ENCODE measurements at regions of chr19 and their contacts with region 1.

Region 1: GRCh38 chr19:13150187-13150930 is at the starts of genes IER2 and STX10:
- DNase-seq: peak; percentile 98
- total RNA-seq, gene IER2: 28.4 TPM
- total RNA-seq, gene STX10: 25.7 TPM

Region 2: DNA sequence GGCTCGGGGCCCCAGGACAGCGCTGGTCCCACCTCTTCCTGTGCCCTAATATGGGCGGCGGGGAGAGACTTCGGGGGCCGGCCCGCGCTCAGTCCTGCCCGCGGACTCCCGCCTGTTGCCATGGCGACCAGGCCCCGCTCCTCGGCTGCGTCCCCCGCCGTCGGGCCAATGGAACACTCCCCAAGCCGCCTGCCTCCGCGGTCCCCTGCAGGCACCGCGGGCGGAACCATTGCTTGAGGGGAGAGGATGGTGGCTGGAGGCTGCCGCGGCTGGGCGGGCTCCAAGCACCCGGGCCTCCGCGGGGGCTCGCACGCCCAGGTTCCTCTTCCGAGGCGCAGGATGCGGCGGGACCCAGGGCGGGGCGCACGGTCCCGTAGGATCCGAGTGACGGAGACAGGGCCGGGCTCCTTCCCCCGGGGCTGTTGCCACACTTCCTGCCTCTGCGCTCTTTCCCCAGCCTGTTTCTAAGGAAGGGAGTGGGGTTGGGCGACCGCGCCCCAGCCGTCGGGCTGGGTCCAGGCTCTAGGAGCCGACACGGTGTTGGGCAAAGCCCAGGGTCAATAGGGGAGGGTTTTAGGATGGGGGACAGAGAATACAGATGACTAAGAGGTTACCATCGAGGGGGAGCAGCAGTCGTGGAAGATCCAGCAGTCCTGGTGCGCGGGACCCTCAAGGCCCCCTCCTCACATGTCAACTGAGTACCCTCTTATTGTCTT is 360.3 kb before region 1 on chr19:
- intact Hi-C with region 1: loop called (anchors 5 kb)
- DNase-seq: peak; percentile 99

Region 3: DNA sequence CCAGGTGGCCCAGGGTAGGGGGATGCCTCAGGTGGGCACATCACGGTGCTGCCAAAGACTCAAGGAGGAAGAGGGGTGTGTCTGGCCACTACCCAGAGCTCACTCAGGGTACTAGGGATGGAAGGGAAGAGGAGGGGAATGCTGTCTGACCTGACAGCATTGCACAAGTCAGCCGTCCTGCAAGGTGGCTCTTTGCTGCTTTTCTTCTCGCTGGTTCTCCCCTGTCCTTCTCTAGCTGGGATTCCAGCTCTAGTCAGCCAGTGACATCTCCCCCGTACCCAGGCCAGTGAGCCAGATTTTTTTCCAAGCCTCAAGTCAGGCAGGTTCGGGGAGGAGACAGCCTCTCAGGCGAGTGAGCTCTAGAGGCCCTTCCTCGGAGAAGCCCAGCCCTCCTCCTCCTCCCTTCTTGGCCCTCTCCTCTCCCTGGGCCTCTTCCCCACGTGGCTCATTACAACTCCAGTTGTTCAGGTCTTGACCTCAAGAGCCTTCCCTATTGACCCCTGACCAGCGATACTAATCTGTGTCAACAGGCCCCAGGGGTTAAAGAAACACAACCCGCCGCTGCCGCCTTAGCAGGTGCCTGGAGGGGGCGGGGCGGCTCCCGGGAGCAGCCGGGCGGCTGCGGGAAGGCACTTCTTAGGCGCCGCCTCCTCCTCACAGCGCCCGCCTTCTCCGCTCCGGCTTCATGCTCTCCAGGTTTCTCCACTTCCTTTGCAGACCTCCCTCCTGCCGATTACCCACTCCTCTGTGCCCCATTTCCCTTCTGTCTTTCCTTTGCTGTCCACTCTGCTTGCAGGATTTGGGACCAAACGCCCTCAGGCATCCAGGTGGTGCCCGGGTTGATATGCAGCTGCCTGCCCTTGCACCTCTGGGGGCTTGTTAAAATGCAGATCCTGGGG is 98.8 kb before region 1 on chr19:
- intact Hi-C with region 1: loop called (anchors 5 kb)
- DNase-seq: no peak

Region 4: GRCh38 chr19:13093407-13094105 is 56.8 kb before region 1 on chr19:
- intact Hi-C with region 1: no loop called
- DNase-seq: peak; percentile 94

Region 5: GRCh38 chr19:13117772-13118423 is 32.5 kb before region 1 on chr19 and contains the start of gene NACC1:
- intact Hi-C with region 1: loop called (anchors 2 kb)
- DNase-seq: peak; percentile 96
- total RNA-seq, gene NACC1: 33.8 TPM

Region 6: DNA sequence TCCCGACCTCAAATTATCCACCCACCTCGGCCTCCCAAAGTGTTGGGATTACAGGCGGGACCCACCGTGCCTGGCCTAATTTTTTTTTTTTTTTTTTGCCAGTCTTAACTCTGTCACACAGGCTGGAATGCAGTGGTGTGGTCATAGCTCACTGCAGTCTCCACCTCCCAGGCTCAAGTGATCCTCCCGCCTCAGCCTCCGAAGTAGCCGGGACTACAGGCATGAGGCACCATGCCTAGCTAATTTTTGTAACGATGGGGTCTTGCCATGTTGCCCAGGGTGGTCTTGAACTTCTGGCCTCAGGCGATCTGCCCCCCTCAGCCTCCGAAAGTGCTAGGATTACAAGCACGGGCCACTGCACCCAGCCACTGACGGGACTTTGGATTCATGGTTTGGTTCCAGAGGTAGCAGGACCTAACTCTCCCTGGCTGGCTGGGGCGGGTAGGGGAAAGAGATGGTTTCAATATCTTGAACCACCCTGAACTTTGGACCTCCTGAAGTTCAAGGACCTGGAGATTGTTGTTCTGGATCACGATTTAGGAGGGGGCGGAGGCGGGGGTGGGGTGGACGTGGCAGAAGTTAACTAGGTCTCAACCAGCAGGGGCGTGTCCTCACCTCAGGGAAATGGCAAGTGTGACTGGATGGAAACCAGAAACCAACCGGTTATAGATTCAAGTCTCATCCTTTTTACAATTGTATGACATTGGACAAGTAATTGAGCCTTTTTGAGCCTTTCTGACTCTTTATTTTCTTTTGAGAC is 40.6 kb after region 1 on chr19:
- intact Hi-C with region 1: no loop called
- DNase-seq: no peak

Region 7: GRCh38 chr19:13207846-13208671 is 57.7 kb after region 1 on chr19:
- intact Hi-C with region 1: loop called (anchors 5 kb)
- DNase-seq: peak; percentile 78

Region 8: DNA sequence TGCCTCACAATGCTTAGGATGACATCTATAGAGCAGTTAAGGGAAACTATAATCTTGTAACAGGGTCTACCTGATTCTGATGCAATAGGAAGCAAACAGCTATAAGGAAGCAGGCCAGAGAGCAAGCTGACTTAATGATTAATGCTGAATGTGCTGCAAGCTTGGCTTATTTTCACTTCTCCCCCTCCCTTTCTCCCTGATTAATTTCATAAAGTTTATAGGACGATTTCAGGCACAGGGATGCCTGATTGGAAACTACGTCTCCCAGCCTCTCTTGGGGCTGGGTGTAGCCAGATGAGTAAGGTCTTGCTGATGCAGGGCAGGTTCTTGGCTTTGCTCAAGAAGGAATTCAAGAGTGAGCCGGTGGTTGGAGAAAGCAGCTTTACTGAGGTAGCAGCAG is 531.1 kb after region 1 on chr19:
- intact Hi-C with region 1: no loop called
- DNase-seq: no peak

Measured in cardiac septum (tissue), 1 donor.